CD8-positive, alpha-beta T cell (primary cell): ENCODE measurements at regions of chr10 and their contacts with region 1.

Region 1: DNA sequence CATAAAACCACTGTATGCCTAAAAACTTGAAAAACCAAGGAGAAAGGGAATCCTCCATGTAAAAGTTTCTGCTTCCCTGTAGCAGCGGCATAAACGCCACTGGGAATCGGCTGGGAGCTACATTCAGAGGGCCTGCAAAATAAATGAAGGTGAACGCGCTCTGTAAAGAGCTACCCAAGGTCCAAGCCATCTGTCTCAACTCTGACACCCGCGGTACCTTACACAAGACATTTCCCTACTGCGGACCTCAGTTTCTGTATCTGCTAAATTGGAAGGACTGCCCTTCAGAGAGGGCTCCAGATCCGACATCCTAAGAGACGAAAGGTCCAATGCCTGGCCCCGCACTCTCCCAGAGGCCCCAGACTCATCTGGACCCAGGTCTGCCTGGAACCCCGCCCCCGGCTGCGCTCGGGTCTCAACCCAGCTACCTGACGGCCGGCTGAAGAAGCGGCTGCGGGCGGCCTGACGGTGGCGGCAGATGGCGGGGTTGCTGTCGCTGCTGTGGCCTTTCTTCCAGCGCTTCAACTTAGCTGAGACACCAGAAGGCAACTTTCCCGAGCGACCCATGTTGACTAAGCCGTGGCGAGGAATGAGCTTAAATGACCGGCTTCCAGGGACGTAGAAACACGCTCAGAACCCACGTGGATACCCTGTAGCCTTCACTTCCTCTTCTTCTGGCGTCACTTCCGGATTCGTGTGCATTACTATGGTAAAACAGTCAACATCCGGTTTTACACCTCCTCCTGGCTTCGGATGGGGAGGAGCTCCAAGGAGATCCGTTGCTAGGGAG is at the start of gene RRP12:
- DNase-seq: peak; percentile 65 to 99 (median 81)
- ATAC-seq: peak; percentile 93
- H3K4me3 ChIP-seq: peak within 1 kb of the TSS; percentile 69 to 88
- H3K4me3 Mint-ChIP-seq: peak within 1 kb of the TSS; percentile 98
- H3K27ac ChIP-seq: peak within 1 kb of the TSS; percentile 93 to 95
- H3K27ac Mint-ChIP-seq: peak within 1 kb of the TSS; percentile 96
- H3K4me1 ChIP-seq: peaks cover 14% of the 10 kb centered on the region
- H3K4me1 Mint-ChIP-seq: peaks cover 16% of the 10 kb centered on the region
- H3K27me3 ChIP-seq: no peaks in the 10 kb centered on the region
- H3K27me3 Mint-ChIP-seq: no peaks in the 10 kb centered on the region
- CTCF ChIP-seq: no peak
- total RNA-seq, gene RRP12: 104 to 107 TPM

Region 2: DNA sequence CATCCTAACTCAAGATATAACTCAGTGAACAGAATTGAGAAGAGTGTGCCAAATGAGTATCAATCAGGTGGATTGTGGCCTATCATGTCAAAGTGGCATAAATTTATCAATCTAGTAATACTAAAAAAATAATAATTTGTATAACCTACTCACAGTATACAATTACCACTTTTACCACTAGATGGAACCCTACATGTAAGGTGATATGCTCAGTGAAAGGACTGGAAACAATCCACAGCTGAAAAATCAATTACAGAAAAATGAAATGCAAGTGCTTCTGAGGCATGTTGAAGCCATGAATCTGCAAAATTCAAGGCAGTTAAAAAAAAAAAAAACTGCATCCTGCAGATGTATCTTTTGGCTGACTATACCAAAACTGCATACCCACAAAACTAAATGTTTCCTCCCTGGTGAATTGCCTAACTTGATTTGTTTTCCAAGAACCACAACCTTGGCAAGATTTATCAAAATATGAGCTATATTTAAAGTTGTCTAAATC is 122.3 kb before region 1 on chr10:
- CTCF ChIA-PET with region 1: interaction called, 7 read pairs
- POLR2A ChIA-PET with region 1: no interaction called
- intact Hi-C with region 1: loop called in 1 of 2 experiments (anchors 2 kb)
- DNase-seq: peak in 2 of 9 experiments; percentile 61 to 74
- ATAC-seq: peak; percentile 84
- H3K4me3 ChIP-seq: no peak overlapping the region
- H3K4me3 Mint-ChIP-seq: no peak overlapping the region
- H3K27ac ChIP-seq: no peak overlapping the region
- H3K27ac Mint-ChIP-seq: no peak overlapping the region
- H3K4me1 ChIP-seq: no peaks in the 10 kb centered on the region
- H3K4me1 Mint-ChIP-seq: peaks cover 5% of the 10 kb centered on the region
- H3K27me3 ChIP-seq: no peaks in the 10 kb centered on the region
- H3K27me3 Mint-ChIP-seq: no peaks in the 10 kb centered on the region
- CTCF ChIP-seq: peak; percentile 82

Region 3: GRCh38 chr10:97302088-97302791 is 98.6 kb before region 1 on chr10:
- CTCF ChIA-PET with region 1: no interaction called
- POLR2A ChIA-PET with region 1: no interaction called
- intact Hi-C with region 1: no loop called
- DNase-seq: no peak
- ATAC-seq: no peak
- H3K4me3 ChIP-seq: no peak overlapping the region
- H3K4me3 Mint-ChIP-seq: no peak overlapping the region
- H3K27ac ChIP-seq: no peak overlapping the region
- H3K27ac Mint-ChIP-seq: no peak overlapping the region
- H3K4me1 ChIP-seq: no peaks in the 10 kb centered on the region
- H3K4me1 Mint-ChIP-seq: no peaks in the 10 kb centered on the region
- H3K27me3 ChIP-seq: no peaks in the 10 kb centered on the region
- H3K27me3 Mint-ChIP-seq: no peaks in the 10 kb centered on the region
- CTCF ChIP-seq: no peak

Region 4: GRCh38 chr10:97318772-97319651 is 81.8 kb before region 1 on chr10 and contains the start of gene FRAT1:
- CTCF ChIA-PET with region 1: no interaction called
- POLR2A ChIA-PET with region 1: interaction called, 13 read pairs
- intact Hi-C with region 1: loop called in 1 of 2 experiments (anchors 1 kb)
- DNase-seq: peak; percentile 86 to 97 (median 92)
- ATAC-seq: peak; percentile 76
- H3K4me3 ChIP-seq: peak within 1 kb of the TSS; percentile 76 to 79
- H3K4me3 Mint-ChIP-seq: peak within 1 kb of the TSS; percentile 99
- H3K27ac ChIP-seq: peak within 1 kb of the TSS; percentile 100
- H3K27ac Mint-ChIP-seq: peak within 1 kb of the TSS; percentile 100
- H3K4me1 ChIP-seq: peaks cover 24% of the 10 kb centered on the region
- H3K4me1 Mint-ChIP-seq: peaks cover 29% of the 10 kb centered on the region
- H3K27me3 ChIP-seq: no peaks in the 10 kb centered on the region
- H3K27me3 Mint-ChIP-seq: no peaks in the 10 kb centered on the region
- CTCF ChIP-seq: no peak
- total RNA-seq, gene FRAT1: 39.6 to 40.2 TPM

Region 5: DNA sequence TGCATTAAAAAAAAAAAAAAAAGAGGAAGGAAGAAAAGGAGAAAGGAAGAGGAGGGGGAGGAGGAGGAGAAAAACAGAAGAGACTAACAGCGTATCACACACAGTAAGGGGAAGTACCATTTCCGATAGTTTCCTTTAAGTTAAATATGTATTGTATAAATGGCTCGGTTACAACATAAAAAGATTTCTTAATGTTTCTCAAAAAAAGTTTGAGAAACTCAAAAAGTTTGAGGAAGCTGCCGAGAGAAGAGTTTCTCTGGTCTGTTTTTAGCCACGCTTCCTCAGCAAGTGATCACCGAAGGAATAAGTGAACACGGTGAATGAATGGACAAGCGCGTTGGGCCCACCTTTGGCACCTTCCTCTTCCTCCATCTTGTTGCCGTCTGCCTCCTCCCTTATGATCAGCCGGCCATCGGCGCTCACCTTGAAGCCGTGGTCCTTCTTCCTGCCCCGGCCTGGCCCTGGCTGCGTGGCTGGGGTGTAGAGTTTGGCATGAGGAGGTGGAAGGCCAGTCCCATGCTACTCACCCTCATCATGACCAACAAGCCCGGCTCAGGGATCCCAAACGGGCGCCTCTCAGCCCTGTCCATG is 35.0 kb before region 1 on chr10:
- CTCF ChIA-PET with region 1: no interaction called
- POLR2A ChIA-PET with region 1: no interaction called
- intact Hi-C with region 1: no loop called
- DNase-seq: no peak
- ATAC-seq: no peak
- H3K4me3 ChIP-seq: no peak overlapping the region
- H3K4me3 Mint-ChIP-seq: no peak overlapping the region
- H3K27ac ChIP-seq: no peak overlapping the region
- H3K27ac Mint-ChIP-seq: no peak overlapping the region
- H3K4me1 ChIP-seq: no peaks in the 10 kb centered on the region
- H3K4me1 Mint-ChIP-seq: no peaks in the 10 kb centered on the region
- H3K27me3 ChIP-seq: no peaks in the 10 kb centered on the region
- H3K27me3 Mint-ChIP-seq: no peaks in the 10 kb centered on the region
- CTCF ChIP-seq: no peak

Region 6: DNA sequence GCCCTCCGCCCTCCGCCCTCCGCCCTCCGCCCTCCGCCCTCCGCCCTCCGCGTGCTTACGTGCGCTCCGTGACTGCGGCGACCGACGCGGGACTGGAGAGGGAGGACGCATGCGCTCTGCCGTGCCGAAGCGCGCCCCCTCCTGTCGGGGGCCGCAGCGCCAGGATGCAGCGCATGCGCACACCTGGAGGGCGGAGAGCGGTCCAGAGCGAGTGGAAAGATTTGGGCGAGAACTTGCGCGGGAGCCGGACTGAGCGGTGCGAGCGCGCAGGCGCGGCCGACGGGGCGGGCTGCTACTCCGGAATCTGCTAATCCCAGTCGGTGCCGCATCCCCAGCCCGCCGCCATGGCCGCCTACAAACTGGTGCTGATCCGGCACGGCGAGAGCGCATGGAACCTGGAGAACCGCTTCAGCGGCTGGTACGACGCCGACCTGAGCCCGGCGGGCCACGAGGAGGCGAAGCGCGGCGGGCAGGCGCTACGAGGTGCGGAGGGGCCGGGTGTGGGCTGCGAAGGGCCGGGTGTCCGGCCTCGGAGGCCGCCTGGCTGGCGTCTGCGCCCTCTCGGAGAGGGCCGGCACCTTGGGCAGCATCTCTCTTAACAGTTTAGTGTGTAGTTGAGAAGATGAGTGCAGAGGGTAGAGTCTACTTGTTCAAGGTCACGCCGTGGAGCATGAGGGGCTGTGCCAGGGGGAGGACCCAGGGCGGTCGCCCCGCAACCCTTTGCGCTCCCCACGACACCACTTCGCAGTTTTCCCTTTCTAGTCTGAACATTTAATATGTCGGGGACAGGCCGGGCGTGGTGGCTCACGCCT is 25.3 kb after region 1 on chr10 and contains the start of gene PGAM1:
- CTCF ChIA-PET with region 1: interaction called, 12 read pairs
- POLR2A ChIA-PET with region 1: no interaction called
- intact Hi-C with region 1: loop called (anchors 1 to 2 kb)
- DNase-seq: peak; percentile 91 to 99 (median 93)
- ATAC-seq: peak; percentile 81
- H3K4me3 ChIP-seq: peak within 1 kb of the TSS; percentile 84
- H3K4me3 Mint-ChIP-seq: peak within 1 kb of the TSS; percentile 90
- H3K27ac ChIP-seq: peak within 1 kb of the TSS; percentile 85 to 86
- H3K27ac Mint-ChIP-seq: peak within 1 kb of the TSS; percentile 92
- H3K4me1 ChIP-seq: peaks cover 24% of the 10 kb centered on the region
- H3K4me1 Mint-ChIP-seq: peaks cover 44% of the 10 kb centered on the region
- H3K27me3 ChIP-seq: no peaks in the 10 kb centered on the region
- H3K27me3 Mint-ChIP-seq: no peaks in the 10 kb centered on the region
- CTCF ChIP-seq: peak; percentile 47
- total RNA-seq, gene PGAM1: 56.7 to 56.8 TPM

Region 7: DNA sequence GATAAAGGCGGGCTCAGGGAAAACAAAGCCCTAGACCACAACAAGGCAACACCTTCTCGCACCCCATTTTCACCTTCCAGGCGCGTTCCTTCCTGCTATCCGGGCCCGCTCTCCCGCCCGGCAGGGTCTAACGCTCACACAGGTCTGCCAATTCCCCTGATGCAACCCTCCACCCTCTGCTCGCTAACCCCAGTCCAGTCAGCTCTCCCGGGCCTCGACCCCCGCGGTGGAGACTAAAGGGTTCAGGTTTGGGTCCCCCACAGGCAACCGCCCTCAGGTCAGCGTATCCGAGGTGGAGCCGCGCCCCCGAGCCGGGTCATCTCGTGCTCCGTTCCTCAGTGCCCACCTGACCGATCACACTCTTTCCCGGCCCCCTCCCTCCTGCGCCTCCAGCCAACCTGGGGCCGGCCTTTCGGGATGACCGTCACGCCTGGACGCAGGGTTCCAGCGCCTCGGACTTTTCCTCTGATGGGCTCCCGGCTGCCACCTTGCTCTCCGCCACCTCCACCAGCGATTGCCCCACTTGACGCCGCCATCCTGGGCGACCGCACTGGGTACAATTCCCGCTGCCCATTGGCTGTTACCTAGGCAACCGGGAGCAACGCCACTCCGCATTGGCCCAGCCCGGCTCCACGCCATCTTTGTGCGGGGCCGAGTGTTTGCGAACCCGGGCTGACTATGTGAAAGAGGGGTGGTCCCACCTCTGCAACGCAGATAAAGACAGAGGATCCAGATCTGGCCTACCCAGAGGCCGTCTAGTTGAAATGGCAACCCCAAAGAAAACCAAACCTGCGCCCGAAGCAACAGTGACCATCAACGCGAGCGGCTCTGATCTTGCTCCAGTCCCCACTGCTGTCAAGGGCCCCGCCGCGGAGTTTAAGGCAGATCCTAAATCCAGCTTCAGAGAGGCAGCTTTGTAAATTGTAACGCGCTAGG is 232.4 kb after region 1 on chr10 and contains the start of gene MORN4:
- CTCF ChIA-PET with region 1: no interaction called
- POLR2A ChIA-PET with region 1: no interaction called
- intact Hi-C with region 1: loop called in 1 of 2 experiments (anchors 1 kb)
- DNase-seq: peak; percentile 82 to 96 (median 91)
- ATAC-seq: peak; percentile 99
- H3K4me3 ChIP-seq: peak within 1 kb of the TSS; percentile 77 to 89
- H3K4me3 Mint-ChIP-seq: peak within 1 kb of the TSS; percentile 99
- H3K27ac ChIP-seq: peak within 1 kb of the TSS; percentile 18 to 39
- H3K27ac Mint-ChIP-seq: peak within 1 kb of the TSS; percentile 83
- H3K4me1 ChIP-seq: peaks cover 3% of the 10 kb centered on the region
- H3K4me1 Mint-ChIP-seq: peaks cover 13% of the 10 kb centered on the region
- H3K27me3 ChIP-seq: peaks cover 0 to 3% of the 10 kb centered on the region in 2 experiments
- H3K27me3 Mint-ChIP-seq: no peaks in the 10 kb centered on the region
- CTCF ChIP-seq: no peak
- total RNA-seq, gene MORN4: not detected

Region 8: DNA sequence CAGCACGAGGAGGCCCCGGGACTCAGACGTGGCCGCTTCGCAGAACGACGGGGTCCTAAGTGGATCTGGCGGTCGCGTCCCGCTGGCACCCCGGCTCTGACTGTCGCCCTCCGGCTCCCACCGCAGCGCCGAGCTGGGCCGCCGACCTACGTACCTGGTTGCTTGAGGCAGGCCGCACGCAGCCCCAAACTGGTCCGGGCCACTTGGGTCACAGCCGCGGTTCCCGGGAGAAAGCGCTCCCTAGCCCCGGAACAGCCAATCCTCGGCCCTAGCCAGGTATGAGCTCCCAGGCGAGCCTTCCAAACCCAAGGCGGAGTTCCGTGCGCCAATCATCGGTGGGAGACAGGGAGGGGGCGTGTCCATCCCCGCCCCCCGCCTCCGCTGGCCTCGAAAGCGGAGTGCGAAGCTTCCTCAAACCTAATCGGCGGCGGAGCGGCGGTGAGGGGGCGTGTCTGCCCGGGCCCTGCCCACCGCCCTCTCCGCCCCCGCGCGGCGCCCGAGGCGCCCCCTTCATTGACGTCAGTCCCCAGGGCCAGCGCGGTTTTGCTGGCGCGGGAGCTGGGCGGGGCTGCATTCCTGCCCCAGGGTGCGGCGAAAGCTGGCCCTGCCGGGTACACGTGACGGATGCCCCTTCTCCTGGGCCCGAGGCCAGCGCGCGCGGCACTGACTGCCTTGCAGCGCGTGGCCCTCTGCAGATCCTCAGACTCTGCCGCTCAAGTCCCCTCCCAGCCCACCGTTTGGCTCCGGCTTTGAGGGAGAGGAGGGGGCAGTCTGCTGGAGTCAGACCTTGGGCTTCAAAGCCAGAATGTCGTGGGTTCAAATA is 286.3 kb after region 1 on chr10 and contains the start of gene AVPI1:
- CTCF ChIA-PET with region 1: no interaction called
- POLR2A ChIA-PET with region 1: interaction called, 5 read pairs
- intact Hi-C with region 1: loop called in 1 of 2 experiments (anchors 1 kb)
- DNase-seq: peak; percentile 90 to 98 (median 96)
- ATAC-seq: peak; percentile 94
- H3K4me3 ChIP-seq: peak within 1 kb of the TSS; percentile 77 to 82
- H3K4me3 Mint-ChIP-seq: peak within 1 kb of the TSS; percentile 89
- H3K27ac ChIP-seq: peak within 1 kb of the TSS; percentile 47 to 64
- H3K27ac Mint-ChIP-seq: peak within 1 kb of the TSS; percentile 86
- H3K4me1 ChIP-seq: peaks cover 22% of the 10 kb centered on the region
- H3K4me1 Mint-ChIP-seq: peaks cover 23% of the 10 kb centered on the region
- H3K27me3 ChIP-seq: no peaks in the 10 kb centered on the region
- H3K27me3 Mint-ChIP-seq: peaks cover 4% of the 10 kb centered on the region
- CTCF ChIP-seq: no peak
- total RNA-seq, gene AVPI1: 13.7 TPM

Region 9: GRCh38 chr10:97718659-97719379 is 318.0 kb after region 1 on chr10:
- CTCF ChIA-PET with region 1: no interaction called
- POLR2A ChIA-PET with region 1: no interaction called
- intact Hi-C with region 1: no loop called
- DNase-seq: no peak
- ATAC-seq: no peak
- H3K4me3 ChIP-seq: no peak overlapping the region
- H3K4me3 Mint-ChIP-seq: no peak overlapping the region
- H3K27ac ChIP-seq: no peak overlapping the region
- H3K27ac Mint-ChIP-seq: no peak overlapping the region
- H3K4me1 ChIP-seq: peaks cover 4% of the 10 kb centered on the region
- H3K4me1 Mint-ChIP-seq: peaks cover 7% of the 10 kb centered on the region
- H3K27me3 ChIP-seq: peaks cover 0 to 2% of the 10 kb centered on the region in 2 experiments
- H3K27me3 Mint-ChIP-seq: peaks cover 2% of the 10 kb centered on the region
- CTCF ChIP-seq: no peak